Colonic mucosa (tissue), 4 donors: ENCODE measurements at regions of chr15 and their contacts with region 1.

Region 1: DNA sequence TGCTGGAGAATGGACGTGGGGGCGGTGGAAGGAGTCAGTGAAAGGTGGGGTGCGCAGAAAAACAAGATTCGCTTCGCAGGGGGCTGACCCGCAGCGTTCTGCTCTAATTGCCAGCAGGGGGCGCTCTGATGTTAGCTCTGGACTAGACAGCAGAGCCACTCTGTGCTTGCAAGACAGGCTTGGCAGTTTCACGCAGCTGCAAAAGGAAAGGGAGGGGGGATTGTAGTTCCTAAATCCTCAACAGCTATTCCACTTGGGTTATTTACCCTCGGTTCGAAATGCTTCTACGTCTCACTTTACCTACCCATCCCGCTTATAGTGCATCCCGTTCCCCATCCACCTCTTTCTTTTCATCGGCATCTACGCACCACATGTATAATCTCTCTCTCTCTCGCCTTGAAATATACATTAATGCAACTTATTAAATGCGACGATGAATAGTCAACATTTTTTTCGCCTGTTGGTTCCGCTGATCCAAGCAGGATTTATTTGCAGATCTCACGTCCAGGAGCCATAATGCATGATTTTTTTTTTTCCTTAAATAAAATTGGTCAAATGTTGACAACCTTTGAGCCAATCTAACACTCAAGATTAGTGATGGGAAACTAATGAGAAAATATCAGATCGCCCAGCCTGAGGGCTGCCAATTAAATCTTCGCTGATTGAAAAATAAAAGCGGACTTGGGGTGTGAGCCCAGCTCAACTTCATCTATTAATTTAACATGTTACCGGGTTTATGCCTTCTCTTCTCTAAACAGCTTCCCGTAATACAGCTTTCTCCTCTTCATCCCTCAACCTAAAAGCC is 216.4 kb downstream of the MEIS2 start:
- DNase-seq: peak; percentile 87
- H3K4me3 ChIP-seq: no peak overlapping the region
- H3K27ac ChIP-seq: no peak overlapping the region
- H3K4me1 ChIP-seq: no peaks in the 10 kb centered on the region
- H3K27me3 ChIP-seq: peaks cover 77% of the 10 kb centered on the region
- CTCF ChIP-seq: peak; percentile 77

Region 2: DNA sequence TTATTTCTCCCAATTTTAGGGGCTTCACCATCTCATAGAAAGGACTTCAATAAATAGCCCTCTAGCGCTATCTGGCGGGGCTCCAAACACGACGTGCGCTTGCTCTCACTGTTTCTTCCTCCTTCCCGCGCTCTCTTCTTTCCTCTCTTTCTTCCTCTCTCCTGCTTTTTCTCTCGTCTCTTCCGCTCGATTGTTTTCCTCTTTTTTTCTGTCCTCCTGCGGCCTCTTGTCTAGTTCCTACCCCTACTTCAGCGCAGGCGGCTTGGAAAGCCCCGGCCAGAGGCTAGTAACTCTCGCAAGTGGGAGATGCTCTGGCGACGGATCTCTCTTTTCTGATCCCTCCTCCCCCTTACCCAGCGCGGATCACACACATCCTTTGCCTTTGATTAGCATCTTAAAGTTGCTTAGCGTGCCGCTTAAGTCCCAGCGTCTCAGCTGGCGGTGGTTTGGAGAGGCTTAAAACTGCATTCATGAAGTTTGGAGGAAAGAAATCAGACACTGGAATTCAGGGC is 222.6 kb after region 1 on chr15:
- intact Hi-C with region 1: loop called (anchors 5 kb)
- DNase-seq: no peak
- H3K4me3 ChIP-seq: no peak overlapping the region
- H3K27ac ChIP-seq: no peak overlapping the region
- H3K4me1 ChIP-seq: no peaks in the 10 kb centered on the region
- H3K27me3 ChIP-seq: peaks cover 61% of the 10 kb centered on the region
- CTCF ChIP-seq: peak; percentile 13

Region 3: GRCh38 chr15:37134699-37135131 is 250.8 kb after region 1 on chr15:
- intact Hi-C with region 1: loop called (anchors 2 kb)
- DNase-seq: no peak
- H3K4me3 ChIP-seq: no peak overlapping the region
- H3K27ac ChIP-seq: no peak overlapping the region
- H3K4me1 ChIP-seq: no peaks in the 10 kb centered on the region
- H3K27me3 ChIP-seq: no peaks in the 10 kb centered on the region
- CTCF ChIP-seq: peak; percentile 61

Region 4: GRCh38 chr15:37880009-37880834 is 996.3 kb after region 1 on chr15:
- intact Hi-C with region 1: loop called (anchors 10 kb)
- DNase-seq: no peak
- H3K4me3 ChIP-seq: no peak overlapping the region
- H3K27ac ChIP-seq: no peak overlapping the region
- H3K4me1 ChIP-seq: no peaks in the 10 kb centered on the region
- H3K27me3 ChIP-seq: no peaks in the 10 kb centered on the region
- CTCF ChIP-seq: peak; percentile 54